B cell (primary cell): ENCODE measurements at regions of chr11 and their contacts with region 1.

Region 1: DNA sequence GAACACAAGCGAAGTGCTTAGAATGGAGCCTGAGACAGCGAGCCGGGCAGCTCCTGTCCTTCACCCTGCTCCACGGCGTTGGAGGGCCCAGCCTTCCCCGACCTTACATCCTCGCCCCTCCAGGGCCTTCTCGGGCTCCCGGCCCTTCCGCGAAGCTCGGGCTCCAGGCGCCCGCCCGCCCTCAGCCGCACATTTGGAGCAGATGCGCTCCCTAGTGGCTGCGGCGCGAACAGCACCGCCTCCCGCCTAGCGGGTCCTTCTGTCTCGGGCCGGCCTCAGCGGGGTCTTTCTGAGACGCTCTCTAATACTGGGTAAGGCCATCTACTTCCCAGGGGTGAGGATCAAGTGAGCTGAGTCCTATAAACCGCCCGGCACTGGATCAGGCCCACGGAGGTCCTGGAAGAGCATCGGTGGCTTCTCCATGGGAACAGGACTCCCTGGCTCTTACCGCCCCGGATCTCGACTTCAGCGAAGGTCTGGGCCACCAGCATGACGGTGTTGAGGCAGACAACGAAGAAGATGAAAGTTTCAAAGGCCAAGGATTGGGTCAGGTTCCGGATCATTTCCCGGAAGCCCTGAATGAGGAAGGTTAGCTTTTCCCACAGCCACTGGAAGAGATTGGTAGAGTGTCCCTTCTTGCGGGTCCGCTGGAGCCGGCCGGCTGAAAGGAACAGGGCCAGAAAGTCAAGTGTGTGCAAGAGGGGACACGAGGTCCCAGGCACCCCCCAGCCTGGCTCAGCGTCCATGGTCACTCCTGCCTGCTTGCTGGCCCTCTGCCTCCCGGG is 3.7 kb downstream of the CATSPER1 start:
- DNase-seq: peak; percentile 85
- ATAC-seq: peak; percentile 99
- H3K4me3 ChIP-seq: no peak overlapping the region
- H3K4me3 Mint-ChIP-seq: no peak overlapping the region
- H3K27ac ChIP-seq: no peak overlapping the region
- H3K27ac Mint-ChIP-seq: no peak overlapping the region
- H3K4me1 ChIP-seq: peaks cover 7% of the 10 kb centered on the region in 2 donors
- H3K4me1 Mint-ChIP-seq: peaks cover 5% of the 10 kb centered on the region
- H3K27me3 ChIP-seq: peaks cover 0 to 9% (median 4%) of the 10 kb centered on the region in 4 experiments
- H3K27me3 Mint-ChIP-seq: peaks cover 7% of the 10 kb centered on the region
- CTCF ChIP-seq: peak; percentile 93

Region 2: GRCh38 chr11:65988791-65989592 is 33.6 kb before region 1 on chr11:
- CTCF ChIA-PET with region 1: no interaction called
- POLR2A ChIA-PET with region 1: no interaction called
- intact Hi-C with region 1: loop called (anchors 1 kb)
- DNase-seq: peak; percentile 96
- ATAC-seq: peak; percentile 99
- H3K4me3 ChIP-seq: no peak overlapping the region
- H3K4me3 Mint-ChIP-seq: no peak overlapping the region
- H3K27ac ChIP-seq: no peak overlapping the region
- H3K27ac Mint-ChIP-seq: peak overlapping the region; percentile 84
- H3K4me1 ChIP-seq: peaks cover 3 to 7% of the 10 kb centered on the region in 2 donors
- H3K4me1 Mint-ChIP-seq: peaks cover 5% of the 10 kb centered on the region
- H3K27me3 ChIP-seq: no peaks in the 10 kb centered on the region
- H3K27me3 Mint-ChIP-seq: no peaks in the 10 kb centered on the region
- CTCF ChIP-seq: peak; percentile 99

Region 3: DNA sequence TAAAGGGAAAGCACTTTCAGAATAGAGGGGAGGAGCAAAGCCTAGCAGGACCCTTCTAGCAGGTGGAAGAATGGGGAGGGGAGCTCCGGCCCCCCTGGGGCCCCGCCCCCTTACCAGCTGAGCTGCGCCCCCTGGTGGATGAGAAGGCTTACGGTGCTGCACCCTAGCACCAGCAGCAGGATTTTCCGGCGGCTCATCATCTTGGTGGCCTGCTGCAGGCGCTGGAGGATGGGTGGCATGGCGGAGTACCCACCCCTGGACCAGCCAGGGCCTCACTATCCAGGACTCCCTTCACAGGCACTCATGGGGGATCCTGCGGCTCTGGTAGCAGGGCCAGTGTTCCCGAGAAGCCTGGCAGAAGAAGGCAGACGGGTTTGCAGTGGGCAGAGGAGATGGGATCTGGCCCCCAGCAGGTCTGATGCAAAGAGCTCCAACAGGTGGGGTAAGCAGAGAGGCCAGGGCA is 22.6 kb after region 1 on chr11:
- CTCF ChIA-PET with region 1: interaction called, 11 read pairs
- POLR2A ChIA-PET with region 1: no interaction called
- intact Hi-C with region 1: no loop called
- DNase-seq: peak; percentile 88
- ATAC-seq: peak; percentile 96
- H3K4me3 ChIP-seq: no peak overlapping the region
- H3K4me3 Mint-ChIP-seq: no peak overlapping the region
- H3K27ac ChIP-seq: no peak overlapping the region
- H3K27ac Mint-ChIP-seq: peak overlapping the region; percentile 7
- H3K4me1 ChIP-seq: peaks cover 10 to 15% of the 10 kb centered on the region in 2 donors
- H3K4me1 Mint-ChIP-seq: peaks cover 16% of the 10 kb centered on the region
- H3K27me3 ChIP-seq: peaks cover 0 to 35% (median 5%) of the 10 kb centered on the region in 4 experiments
- H3K27me3 Mint-ChIP-seq: peaks cover 12% of the 10 kb centered on the region
- CTCF ChIP-seq: peak; percentile 94